Calu3 (cell line): ENCODE measurements at regions of chr5 and their contacts with region 1.

Region 1: GRCh38 chr5:124741711-124742496 is 4.5 kb downstream of the ZNF608 start:
- DNase-seq: peak; percentile 65
- H3K4me3 Mint-ChIP-seq: no peak overlapping the region
- H3K27ac Mint-ChIP-seq: no peak overlapping the region
- H3K4me1 Mint-ChIP-seq: peaks cover 27% of the 10 kb centered on the region
- H3K27me3 Mint-ChIP-seq: no peaks in the 10 kb centered on the region
- CTCF ChIP-seq: no peak

Region 2: DNA sequence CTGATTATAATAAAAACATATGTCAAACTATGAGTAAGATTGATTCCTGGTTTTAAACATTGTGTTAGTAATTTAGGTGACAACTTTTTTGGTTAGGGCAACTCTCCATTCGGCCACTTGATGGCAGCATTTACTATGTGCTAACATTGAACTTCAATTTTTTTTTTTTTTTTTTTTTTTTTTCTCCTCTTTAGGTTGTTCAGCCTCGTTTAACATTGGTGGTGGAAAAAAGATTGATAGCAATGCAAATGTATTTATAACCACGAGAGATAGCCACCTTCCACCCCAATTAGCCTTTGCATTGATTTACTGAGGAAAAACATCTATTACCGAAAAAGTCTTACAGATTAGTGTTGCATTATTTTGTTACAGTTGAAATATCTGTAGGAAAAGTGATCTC is 1070.9 kb before region 1 on chr5:
- CTCF ChIA-PET with region 1: no interaction called
- intact Hi-C with region 1: loop called (anchors 5 kb)
- DNase-seq: peak; percentile 47
- H3K4me3 Mint-ChIP-seq: no peak overlapping the region
- H3K27ac Mint-ChIP-seq: no peak overlapping the region
- H3K4me1 Mint-ChIP-seq: no peaks in the 10 kb centered on the region
- H3K27me3 Mint-ChIP-seq: no peaks in the 10 kb centered on the region
- CTCF ChIP-seq: peak; percentile 77

Region 3: DNA sequence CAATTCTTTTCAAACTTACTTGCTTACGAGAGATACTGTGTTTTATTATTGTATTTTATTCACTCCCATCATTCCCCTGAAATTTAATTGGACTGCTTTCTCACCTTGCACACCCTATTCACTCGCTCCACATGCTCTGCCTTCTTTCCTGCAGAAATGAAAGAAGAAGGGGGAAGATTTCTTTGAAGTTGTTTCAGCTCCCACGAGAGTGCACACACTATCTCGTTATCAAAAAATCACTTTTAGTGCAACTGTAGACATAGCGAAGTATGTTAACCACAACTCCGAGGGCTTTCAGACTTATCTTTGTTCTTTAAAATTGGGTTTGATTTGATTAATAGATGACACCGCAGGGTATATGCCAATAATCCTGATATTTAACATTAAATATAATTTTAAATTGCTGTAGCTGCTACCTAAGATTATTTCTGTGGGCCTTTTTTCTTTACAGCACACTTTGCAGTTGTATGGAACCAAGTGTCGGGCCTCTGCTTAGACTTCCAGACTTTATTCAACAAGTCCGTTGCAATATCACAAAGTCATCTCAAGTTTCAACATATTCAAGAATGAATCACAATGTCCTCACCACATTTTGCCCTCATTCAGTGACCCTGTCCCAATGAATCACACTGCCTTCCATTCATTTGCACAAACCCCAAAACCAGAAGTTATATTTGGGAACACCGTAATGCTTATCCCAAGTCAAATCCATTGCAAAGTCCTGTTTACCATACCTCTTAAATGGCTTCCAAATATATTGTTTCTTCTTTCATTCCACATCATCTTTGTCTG is 790.5 kb before region 1 on chr5:
- CTCF ChIA-PET with region 1: no interaction called
- intact Hi-C with region 1: loop called (anchors 5 kb)
- DNase-seq: peak; percentile 65
- H3K4me3 Mint-ChIP-seq: peak overlapping the region; percentile 16
- H3K27ac Mint-ChIP-seq: no peak overlapping the region
- H3K4me1 Mint-ChIP-seq: peaks cover 19% of the 10 kb centered on the region
- H3K27me3 Mint-ChIP-seq: peaks cover 37% of the 10 kb centered on the region
- CTCF ChIP-seq: no peak

Region 4: DNA sequence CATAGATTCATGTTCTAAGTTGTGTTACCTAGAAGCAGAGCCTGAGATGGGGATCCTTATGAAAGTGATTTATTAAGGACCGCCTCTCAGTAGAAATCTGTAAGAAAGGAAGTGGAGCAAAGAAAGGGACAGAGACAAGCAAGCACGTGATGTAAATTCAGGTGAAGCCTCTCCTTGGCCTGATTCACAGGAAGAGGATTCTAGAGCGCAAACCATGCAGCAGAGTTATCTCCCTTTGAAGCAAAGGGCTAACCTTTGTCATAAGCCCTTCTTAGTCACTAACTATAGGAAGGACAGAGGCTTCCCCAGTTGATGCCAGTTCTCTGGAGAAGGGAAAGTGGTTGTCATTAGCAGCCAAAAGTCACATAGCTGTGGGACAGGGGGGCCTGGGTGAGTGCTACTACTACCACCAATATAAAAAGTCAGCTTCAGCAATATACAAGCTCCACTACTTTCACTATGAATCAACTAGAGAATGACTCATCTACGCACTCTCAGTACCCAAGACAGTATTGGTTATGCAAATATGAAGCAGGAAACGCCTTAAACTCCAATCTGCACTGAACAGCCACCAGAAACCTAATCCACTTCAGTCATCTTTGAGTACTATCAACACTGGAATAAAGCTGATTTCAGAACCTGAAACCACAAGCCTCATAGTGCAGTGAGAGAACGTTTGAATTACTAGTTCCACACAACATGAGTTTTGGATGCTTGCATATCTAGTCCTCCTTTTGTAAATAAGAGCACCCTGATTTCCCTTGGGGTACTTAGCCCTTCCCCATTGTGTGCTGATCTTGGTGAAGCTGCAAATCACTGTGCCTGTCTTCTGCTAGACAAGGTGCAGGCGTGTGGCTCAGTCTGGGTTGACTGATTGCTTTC is 158.2 kb before region 1 on chr5:
- CTCF ChIA-PET with region 1: interaction called, 3 read pairs
- intact Hi-C with region 1: loop called (anchors 2 kb)
- DNase-seq: peak; percentile 51
- H3K4me3 Mint-ChIP-seq: no peak overlapping the region
- H3K27ac Mint-ChIP-seq: peak overlapping the region; percentile 24
- H3K4me1 Mint-ChIP-seq: peaks cover 45% of the 10 kb centered on the region
- H3K27me3 Mint-ChIP-seq: no peaks in the 10 kb centered on the region
- CTCF ChIP-seq: no peak

Region 5: GRCh38 chr5:124952079-124952478 is 210.2 kb after region 1 on chr5:
- CTCF ChIA-PET with region 1: no interaction called
- intact Hi-C with region 1: no loop called
- DNase-seq: no peak
- H3K4me3 Mint-ChIP-seq: no peak overlapping the region
- H3K27ac Mint-ChIP-seq: no peak overlapping the region
- H3K4me1 Mint-ChIP-seq: peaks cover 12% of the 10 kb centered on the region
- H3K27me3 Mint-ChIP-seq: no peaks in the 10 kb centered on the region
- CTCF ChIP-seq: no peak

Region 6: GRCh38 chr5:125125031-125125823 is 383.3 kb after region 1 on chr5:
- CTCF ChIA-PET with region 1: no interaction called
- intact Hi-C with region 1: loop called (anchors 5 kb)
- DNase-seq: no peak
- H3K4me3 Mint-ChIP-seq: no peak overlapping the region
- H3K27ac Mint-ChIP-seq: no peak overlapping the region
- H3K4me1 Mint-ChIP-seq: peaks cover 19% of the 10 kb centered on the region
- H3K27me3 Mint-ChIP-seq: no peaks in the 10 kb centered on the region
- CTCF ChIP-seq: no peak